ENCODE measurements at regions of chr12 and their contacts with region 1.

Region 1: DNA sequence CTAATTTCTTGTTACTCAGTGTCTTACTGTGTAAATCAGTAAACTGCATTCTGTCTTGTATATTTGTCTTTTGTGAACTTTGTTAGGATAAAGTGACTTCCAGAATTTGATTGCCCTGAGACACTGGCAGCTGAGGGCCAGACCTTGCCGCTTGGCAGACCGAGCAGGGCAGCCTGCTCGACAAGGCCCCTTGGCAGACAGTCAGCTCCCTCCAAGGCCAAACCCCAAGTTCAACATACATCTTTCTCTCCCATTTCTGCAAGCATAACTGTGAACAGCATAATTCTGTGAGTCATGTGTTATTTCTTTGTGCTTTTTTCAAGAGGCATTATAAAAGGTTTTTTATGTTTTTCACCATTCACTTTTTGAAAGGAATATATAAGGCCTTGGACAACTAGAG is 39.2 kb upstream of the BMAL2 start:
- DNase-seq: no peak
- H3K4me3 ChIP-seq: no peak overlapping the region
- H3K27ac ChIP-seq: peak overlapping the region; percentile 17 to 65 (median 56)
- H3K4me1 ChIP-seq: peaks cover 0 to 96% (median 81%) of the 10 kb centered on the region in 4 donors
- H3K27me3 ChIP-seq: no peaks in the 10 kb centered on the region
- CTCF ChIP-seq: no peak
- EP300 ChIP-seq: no peak
- POLR2A ChIP-seq: no peak

Region 2: DNA sequence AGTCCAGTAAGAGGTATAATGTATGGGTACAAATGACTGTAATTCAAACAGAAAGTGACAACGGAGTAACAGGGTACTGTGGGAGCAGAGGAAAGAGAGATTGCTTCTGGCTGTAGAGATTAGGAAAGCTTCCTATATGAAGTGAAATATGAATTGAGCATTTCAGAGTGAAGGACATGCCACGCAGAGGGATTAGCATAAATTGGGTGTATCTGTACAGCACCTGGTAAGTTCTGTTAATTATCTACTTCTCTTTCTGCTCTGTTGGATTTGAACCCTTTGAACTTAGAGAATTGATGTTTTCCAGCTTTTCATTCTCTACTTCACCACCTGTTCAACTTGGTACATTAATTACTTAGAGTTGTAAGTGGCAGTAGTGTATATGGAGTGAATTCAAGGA is 40.5 kb before region 1 on chr12:
- intact Hi-C with region 1: loop called (anchors 5 kb)
- DNase-seq: no peak
- H3K4me3 ChIP-seq: no peak overlapping the region
- H3K27ac ChIP-seq: peak overlapping the region; percentile 24 to 95 (median 78)
- H3K4me1 ChIP-seq: peaks cover 0 to 98% (median 79%) of the 10 kb centered on the region in 4 donors
- H3K27me3 ChIP-seq: no peaks in the 10 kb centered on the region
- CTCF ChIP-seq: no peak
- EP300 ChIP-seq: no peak
- POLR2A ChIP-seq: no peak

Measured in sigmoid colon (tissue), 7 donors.